H1 (cell line): ENCODE measurements at regions of chr19 and their contacts with region 1.

Region 1: GRCh38 chr19:39671738-39672363 is 16.1 kb downstream of the LGALS16 start:
- DNase-seq: peak; percentile 15 to 50
- H3K4me3 ChIP-seq: no peak overlapping the region
- H3K27ac ChIP-seq: no peak overlapping the region
- H3K4me1 ChIP-seq: peaks cover 0 to 8% (median 2%) of the 10 kb centered on the region in 4 experiments; a peak in 2 of 7 replicates
- H3K27me3 ChIP-seq: no peaks in the 10 kb centered on the region
- CTCF ChIP-seq: peak in 2 of 3 experiments; percentile 74 to 88; a peak in 3 of 4 replicates
- EP300 ChIP-seq: no peak
- POLR2A ChIP-seq: no peak
- RAD21 ChIP-seq: peak; percentile 95 to 97

Region 2: GRCh38 chr19:39539519-39540332 is 132.1 kb before region 1 on chr19 and contains the start of gene EID2:
- CTCF ChIA-PET with region 1: interaction called, 11 read pairs
- POLR2A ChIA-PET with region 1: no interaction called
- DNase-seq: peak in 1 of 2 experiments; percentile 96
- H3K4me3 ChIP-seq: peak within 1 kb of the TSS; percentile 70 to 94 (median 92)
- H3K27ac ChIP-seq: peak within 1 kb of the TSS; percentile 84
- H3K4me1 ChIP-seq: peaks cover 0 to 4% (median under 1%) of the 10 kb centered on the region in 4 experiments; a peak in 3 of 7 replicates
- H3K27me3 ChIP-seq: no peaks in the 10 kb centered on the region
- CTCF ChIP-seq: peak; percentile 66 to 85 (median 74)
- EP300 ChIP-seq: no peak
- POLR2A ChIP-seq: peak in 1 of 2 experiments; percentile 83; a peak in 2 of 3 replicates
- RAD21 ChIP-seq: peak; percentile 46 to 54
- total RNA-seq, gene EID2: 29.6 and 29.9 TPM in 2 replicates

Region 3: GRCh38 chr19:39558152-39559117 is 113.4 kb before region 1 on chr19:
- CTCF ChIA-PET with region 1: interaction called, 108 read pairs
- POLR2A ChIA-PET with region 1: interaction called, 3 read pairs
- DNase-seq: no peak
- H3K4me3 ChIP-seq: no peak overlapping the region
- H3K27ac ChIP-seq: no peak overlapping the region
- H3K4me1 ChIP-seq: no peaks in the 10 kb centered on the region
- H3K27me3 ChIP-seq: no peaks in the 10 kb centered on the region; a peak in 1 of 7 replicates
- CTCF ChIP-seq: no peak
- EP300 ChIP-seq: no peak
- POLR2A ChIP-seq: no peak
- RAD21 ChIP-seq: no peak